B cell (primary cell): ENCODE measurements at regions of chr20 and their contacts with region 1.

Region 1: DNA sequence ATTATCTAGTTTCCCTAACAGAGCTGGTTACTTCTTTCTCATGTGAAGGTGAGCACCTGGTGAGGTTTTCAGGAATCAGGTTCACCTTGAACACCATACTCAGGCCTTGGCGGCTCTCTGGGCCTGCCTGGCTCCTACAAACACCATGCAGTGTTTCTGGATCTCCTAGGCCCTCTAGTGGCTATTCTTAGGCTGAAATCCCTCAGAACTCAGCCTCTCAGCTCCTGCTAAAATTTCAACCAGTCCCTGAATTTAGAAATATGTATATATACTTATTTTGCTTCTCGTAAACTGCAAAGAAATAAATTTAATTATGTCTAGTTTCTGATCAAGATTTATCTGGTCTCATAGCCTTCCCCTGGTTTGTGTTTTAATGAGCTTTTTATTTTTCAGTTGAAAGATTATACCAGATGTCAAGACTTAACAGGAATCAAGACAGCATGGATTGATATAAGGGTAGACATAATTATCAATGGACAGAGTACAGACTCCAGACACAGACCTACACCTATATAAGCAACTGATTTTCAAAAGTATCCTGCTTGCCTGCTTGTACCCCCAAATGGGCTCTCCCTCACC is 55.9 kb downstream of the ANKEF1 start:
- DNase-seq: peak; percentile 54
- ATAC-seq: no peak
- H3K4me3 ChIP-seq: no peak overlapping the region
- H3K4me3 Mint-ChIP-seq: no peak overlapping the region
- H3K27ac ChIP-seq: no peak overlapping the region
- H3K27ac Mint-ChIP-seq: no peak overlapping the region
- H3K4me1 ChIP-seq: no peaks in the 10 kb centered on the region
- H3K4me1 Mint-ChIP-seq: no peaks in the 10 kb centered on the region
- H3K27me3 ChIP-seq: peaks cover 0 to 4% (median 1%) of the 10 kb centered on the region in 4 experiments
- H3K27me3 Mint-ChIP-seq: peaks cover 8% of the 10 kb centered on the region
- CTCF ChIP-seq: peak; percentile 74

Region 2: DNA sequence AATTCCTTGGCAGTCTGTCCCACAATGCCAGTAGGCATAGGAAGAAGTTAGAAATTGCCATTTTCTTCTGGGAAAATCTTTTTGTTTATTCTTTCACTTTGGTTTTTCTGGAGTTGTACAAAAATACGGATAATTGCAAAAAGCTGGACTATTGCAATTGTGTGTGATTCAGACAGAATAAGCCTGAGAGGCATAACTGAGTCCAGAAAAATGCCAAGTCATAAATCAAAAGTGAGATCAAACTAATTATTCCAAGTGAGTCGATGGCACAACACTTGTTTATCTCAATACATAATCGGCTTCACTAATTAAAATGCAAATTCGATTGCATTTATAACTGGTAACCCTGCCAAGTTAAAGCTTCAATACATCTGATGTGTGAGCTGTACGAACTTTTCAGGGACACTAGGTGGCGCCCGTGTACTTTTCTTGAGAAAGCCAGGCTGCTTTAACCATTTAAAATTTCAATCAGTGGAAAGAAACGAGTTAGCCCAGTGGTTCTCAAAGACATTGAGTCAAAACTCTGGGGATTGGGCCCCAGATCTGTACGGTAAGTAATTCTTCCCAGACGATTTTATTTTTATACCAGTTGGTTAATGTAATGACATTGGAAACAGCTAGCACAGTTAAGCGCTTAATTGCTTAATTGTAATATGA is 473.7 kb before region 1 on chr20:
- CTCF ChIA-PET with region 1: interaction called, 11 read pairs
- POLR2A ChIA-PET with region 1: no interaction called
- intact Hi-C with region 1: loop called (anchors 5 kb)
- DNase-seq: peak; percentile 25
- ATAC-seq: no peak
- H3K4me3 ChIP-seq: no peak overlapping the region
- H3K4me3 Mint-ChIP-seq: no peak overlapping the region
- H3K27ac ChIP-seq: no peak overlapping the region
- H3K27ac Mint-ChIP-seq: no peak overlapping the region
- H3K4me1 ChIP-seq: peaks cover 0 to 12% of the 10 kb centered on the region in 2 donors
- H3K4me1 Mint-ChIP-seq: peaks cover 5% of the 10 kb centered on the region
- H3K27me3 ChIP-seq: peaks cover 0 to 9% (median 1%) of the 10 kb centered on the region in 4 experiments
- H3K27me3 Mint-ChIP-seq: peaks cover 19% of the 10 kb centered on the region
- CTCF ChIP-seq: peak; percentile 63

Region 3: GRCh38 chr20:10105046-10105445 is 14.4 kb after region 1 on chr20:
- CTCF ChIA-PET with region 1: interaction called, 11 read pairs
- POLR2A ChIA-PET with region 1: no interaction called
- intact Hi-C with region 1: no loop called
- DNase-seq: no peak
- ATAC-seq: no peak
- H3K4me3 ChIP-seq: no peak overlapping the region
- H3K4me3 Mint-ChIP-seq: no peak overlapping the region
- H3K27ac ChIP-seq: no peak overlapping the region
- H3K27ac Mint-ChIP-seq: no peak overlapping the region
- H3K4me1 ChIP-seq: no peaks in the 10 kb centered on the region
- H3K4me1 Mint-ChIP-seq: no peaks in the 10 kb centered on the region
- H3K27me3 ChIP-seq: no peaks in the 10 kb centered on the region
- H3K27me3 Mint-ChIP-seq: no peaks in the 10 kb centered on the region
- CTCF ChIP-seq: no peak

Region 4: DNA sequence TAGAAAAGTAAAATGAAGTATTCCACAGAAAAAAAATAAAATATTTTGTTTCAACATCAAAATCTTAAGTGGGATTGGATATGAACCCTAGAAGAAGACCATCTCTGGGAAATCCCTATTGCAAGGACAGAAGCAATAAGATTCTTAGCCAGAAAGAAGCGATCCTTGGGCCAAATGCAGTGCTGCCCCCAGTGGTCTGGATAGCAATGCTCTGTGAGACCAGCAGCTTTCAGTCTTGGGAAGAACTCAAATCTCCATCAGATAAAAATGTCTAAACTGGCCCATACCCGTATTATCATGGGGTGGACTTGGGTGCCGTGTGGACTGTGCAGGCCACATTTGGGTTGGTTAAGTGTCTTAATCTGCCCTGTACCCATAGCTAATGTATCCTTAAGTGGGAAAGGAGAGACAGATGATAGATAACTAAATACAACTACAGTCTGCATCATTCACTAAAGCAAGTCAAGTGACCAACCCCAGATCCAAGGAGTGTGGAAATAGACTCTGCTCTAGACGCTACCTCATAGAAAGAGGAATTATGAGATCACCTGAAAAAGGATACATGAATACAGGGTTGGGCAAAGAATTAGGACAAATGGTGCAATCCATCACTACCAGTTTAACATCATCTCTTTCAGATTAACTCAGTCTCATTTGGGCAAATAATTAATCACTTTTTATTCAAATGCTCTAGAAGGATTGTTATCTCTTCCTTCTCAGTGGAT is 89.1 kb after region 1 on chr20:
- CTCF ChIA-PET with region 1: no interaction called
- POLR2A ChIA-PET with region 1: no interaction called
- intact Hi-C with region 1: no loop called
- DNase-seq: no peak
- ATAC-seq: no peak
- H3K4me3 ChIP-seq: no peak overlapping the region
- H3K4me3 Mint-ChIP-seq: no peak overlapping the region
- H3K27ac ChIP-seq: no peak overlapping the region
- H3K27ac Mint-ChIP-seq: no peak overlapping the region
- H3K4me1 ChIP-seq: no peaks in the 10 kb centered on the region
- H3K4me1 Mint-ChIP-seq: no peaks in the 10 kb centered on the region
- H3K27me3 ChIP-seq: peaks cover 0 to 4% (median 0%) of the 10 kb centered on the region in 4 experiments
- H3K27me3 Mint-ChIP-seq: peaks cover under 1% of the 10 kb centered on the region
- CTCF ChIP-seq: no peak

Region 5: DNA sequence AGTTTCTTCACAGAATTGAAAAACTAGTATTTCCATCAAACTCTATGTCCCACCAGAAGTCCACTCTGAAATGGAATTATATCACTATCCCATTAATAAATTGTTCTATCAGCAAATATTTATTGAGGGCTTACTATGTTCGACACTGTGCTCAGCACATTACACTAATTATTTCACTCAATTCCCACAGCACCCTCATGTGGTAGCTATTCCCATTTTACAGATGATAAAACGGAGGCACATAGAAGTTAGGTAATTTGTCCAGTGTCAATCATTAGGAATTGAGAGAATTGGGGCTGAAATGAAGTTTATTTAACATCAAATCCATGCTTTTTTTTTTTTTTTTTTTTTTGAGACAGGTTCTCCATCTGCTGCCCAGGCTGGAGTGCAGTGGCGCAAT is 290.8 kb after region 1 on chr20:
- CTCF ChIA-PET with region 1: no interaction called
- POLR2A ChIA-PET with region 1: no interaction called
- intact Hi-C with region 1: no loop called
- DNase-seq: no peak
- ATAC-seq: no peak
- H3K4me3 ChIP-seq: no peak overlapping the region
- H3K4me3 Mint-ChIP-seq: no peak overlapping the region
- H3K27ac ChIP-seq: no peak overlapping the region
- H3K27ac Mint-ChIP-seq: no peak overlapping the region
- H3K4me1 ChIP-seq: no peaks in the 10 kb centered on the region
- H3K4me1 Mint-ChIP-seq: no peaks in the 10 kb centered on the region
- H3K27me3 ChIP-seq: peaks cover 0 to 6% (median 0%) of the 10 kb centered on the region in 4 experiments
- H3K27me3 Mint-ChIP-seq: peaks cover 16% of the 10 kb centered on the region
- CTCF ChIP-seq: no peak